Activated CD4-positive, alpha-beta T cell treated with anti-CD3 and anti-CD28 coated beads for 36 hours (primary cell): ENCODE measurements at regions of chr16 and their contacts with region 1.

Region 1: GRCh38 chr16:77171745-77172635 is 19.0 kb upstream of the MON1B start:
- DNase-seq: peak; percentile 27
- ATAC-seq: peak; percentile 57
- H3K4me3 Mint-ChIP-seq: no peak overlapping the region
- H3K27ac Mint-ChIP-seq: no peak overlapping the region
- H3K4me1 Mint-ChIP-seq: no peaks in the 10 kb centered on the region
- H3K27me3 Mint-ChIP-seq: peaks cover 47% of the 10 kb centered on the region

Region 2: DNA sequence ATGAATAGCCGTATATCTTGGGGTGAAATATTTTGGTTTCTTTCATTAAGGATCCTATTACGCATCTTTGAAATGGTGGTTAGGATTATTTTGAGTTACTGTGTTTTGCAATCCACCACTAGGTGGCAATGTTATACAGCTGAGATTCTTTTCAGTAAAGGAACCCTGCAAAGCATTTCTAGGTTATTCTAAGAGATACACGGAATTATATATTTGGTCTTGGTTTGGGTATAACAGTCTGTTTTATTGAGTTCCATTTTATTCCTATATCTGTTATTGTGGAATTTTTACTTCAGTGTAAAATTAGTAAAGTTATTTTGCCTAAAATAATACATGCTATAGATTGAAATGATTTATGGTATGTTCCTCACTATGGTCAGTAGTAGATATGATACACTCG is 1382.8 kb before region 1 on chr16:
- CTCF ChIA-PET with region 1: interaction called, 30 read pairs
- POLR2A ChIA-PET with region 1: no interaction called
- intact Hi-C with region 1: loop called in 1 of 2 experiments (anchors 1 kb)
- DNase-seq: no peak
- ATAC-seq: peak; percentile 42
- H3K4me3 Mint-ChIP-seq: no peak overlapping the region
- H3K27ac Mint-ChIP-seq: no peak overlapping the region
- H3K4me1 Mint-ChIP-seq: no peaks in the 10 kb centered on the region
- H3K27me3 Mint-ChIP-seq: peaks cover 5% of the 10 kb centered on the region

Region 3: DNA sequence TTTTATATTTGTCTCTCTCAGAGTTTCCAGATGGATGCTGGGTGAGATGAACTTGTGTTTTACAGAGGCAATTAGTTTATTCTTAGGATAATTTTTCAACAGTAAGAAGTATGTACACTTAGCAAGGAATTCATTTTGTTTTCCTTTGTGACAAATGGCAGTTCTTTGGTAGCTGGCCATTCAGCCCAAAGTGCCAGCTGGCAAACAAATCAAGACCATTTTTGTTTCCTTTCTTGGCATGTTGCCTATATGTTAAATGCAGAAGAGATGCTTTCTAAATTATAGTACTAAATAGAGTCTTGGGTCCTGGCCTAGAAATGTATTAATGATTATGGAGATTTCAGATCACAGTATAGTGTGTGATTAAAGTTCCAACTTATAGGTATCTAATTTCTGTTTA is 557.7 kb before region 1 on chr16:
- CTCF ChIA-PET with region 1: no interaction called
- POLR2A ChIA-PET with region 1: no interaction called
- intact Hi-C with region 1: no loop called
- DNase-seq: no peak
- ATAC-seq: no peak
- H3K4me3 Mint-ChIP-seq: no peak overlapping the region
- H3K27ac Mint-ChIP-seq: no peak overlapping the region
- H3K4me1 Mint-ChIP-seq: no peaks in the 10 kb centered on the region
- H3K27me3 Mint-ChIP-seq: no peaks in the 10 kb centered on the region

Region 4: GRCh38 chr16:76668207-76668725 is 503.7 kb before region 1 on chr16:
- CTCF ChIA-PET with region 1: no interaction called
- POLR2A ChIA-PET with region 1: no interaction called
- intact Hi-C with region 1: loop called in 1 of 2 experiments (anchors 5 kb)
- DNase-seq: peak; percentile 5
- ATAC-seq: no peak
- H3K4me3 Mint-ChIP-seq: no peak overlapping the region
- H3K27ac Mint-ChIP-seq: no peak overlapping the region
- H3K4me1 Mint-ChIP-seq: no peaks in the 10 kb centered on the region
- H3K27me3 Mint-ChIP-seq: no peaks in the 10 kb centered on the region

Region 5: GRCh38 chr16:77043076-77043475 is 128.9 kb before region 1 on chr16:
- CTCF ChIA-PET with region 1: interaction called, 3 read pairs
- POLR2A ChIA-PET with region 1: no interaction called
- intact Hi-C with region 1: loop called in 1 of 2 experiments (anchors 10 kb)
- DNase-seq: no peak
- ATAC-seq: no peak
- H3K4me3 Mint-ChIP-seq: no peak overlapping the region
- H3K27ac Mint-ChIP-seq: no peak overlapping the region
- H3K4me1 Mint-ChIP-seq: no peaks in the 10 kb centered on the region
- H3K27me3 Mint-ChIP-seq: peaks cover 7% of the 10 kb centered on the region

Region 6: DNA sequence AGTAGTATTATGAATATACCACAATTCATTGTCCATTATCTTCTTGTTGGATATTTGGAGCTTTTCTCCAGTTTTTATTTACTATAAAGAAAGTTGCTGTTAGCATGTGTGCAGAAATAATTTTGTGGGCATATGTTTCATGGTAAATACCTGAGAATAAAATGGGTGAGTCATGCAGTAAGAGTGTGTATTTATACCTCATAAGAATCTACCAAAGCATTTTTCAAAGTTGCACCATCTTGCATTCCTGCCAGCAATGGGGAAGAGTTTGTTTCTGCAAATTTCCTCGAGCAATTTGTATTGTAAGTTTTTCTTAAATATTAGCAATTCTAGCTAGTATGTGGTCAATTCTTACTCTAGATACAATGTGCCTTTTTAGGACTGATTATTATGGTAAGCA is 11.1 kb after region 1 on chr16:
- CTCF ChIA-PET with region 1: interaction called, 21 read pairs
- POLR2A ChIA-PET with region 1: no interaction called
- intact Hi-C with region 1: no loop called
- DNase-seq: no peak
- ATAC-seq: no peak
- H3K4me3 Mint-ChIP-seq: no peak overlapping the region
- H3K27ac Mint-ChIP-seq: no peak overlapping the region
- H3K4me1 Mint-ChIP-seq: no peaks in the 10 kb centered on the region
- H3K27me3 Mint-ChIP-seq: peaks cover 11% of the 10 kb centered on the region